Panc1 (cell line): ENCODE measurements at regions of chr17 and their contacts with region 1.

Region 1: GRCh38 chr17:51921500-51921899 is 237.0 kb downstream of the CA10 start:
- DNase-seq: no peak
- ATAC-seq: no peak
- H3K4me3 ChIP-seq: no peak overlapping the region
- H3K27ac ChIP-seq: no peak overlapping the region
- H3K4me1 ChIP-seq: no peaks in the 10 kb centered on the region
- H3K27me3 ChIP-seq: no peaks in the 10 kb centered on the region
- CTCF ChIP-seq: no peak

Region 2: DNA sequence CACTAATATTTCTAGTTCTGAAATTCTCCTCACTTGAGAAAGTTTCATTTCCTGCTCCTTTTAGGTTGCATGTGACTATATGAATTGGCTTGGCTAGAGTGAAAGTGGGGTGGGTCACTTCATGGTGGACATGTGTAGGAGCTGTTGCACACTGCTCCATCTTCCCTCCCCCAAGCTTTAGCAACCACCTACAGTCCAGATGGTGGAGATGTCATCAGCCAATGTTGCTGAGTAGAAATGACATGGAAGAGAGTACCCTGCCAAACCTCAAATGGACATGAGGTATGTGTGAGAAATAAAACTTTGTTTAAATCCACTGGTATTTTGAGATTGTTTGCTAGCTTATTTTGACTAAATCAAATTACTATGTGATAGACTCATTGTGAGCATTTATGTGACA is 44.5 kb before region 1 on chr17:
- CTCF ChIA-PET with region 1: interaction called, 4 read pairs
- POLR2A ChIA-PET with region 1: interaction called, 11 read pairs
- in situ Hi-C with region 1: no loop called
- intact Hi-C with region 1: no loop called
- DNase-seq: no peak
- ATAC-seq: no peak
- H3K4me3 ChIP-seq: no peak overlapping the region
- H3K27ac ChIP-seq: no peak overlapping the region
- H3K4me1 ChIP-seq: no peaks in the 10 kb centered on the region
- H3K27me3 ChIP-seq: no peaks in the 10 kb centered on the region
- CTCF ChIP-seq: no peak